CD8-positive, alpha-beta T cell (primary cell): ENCODE measurements at regions of chr11 and their contacts with region 1.

Region 1: DNA sequence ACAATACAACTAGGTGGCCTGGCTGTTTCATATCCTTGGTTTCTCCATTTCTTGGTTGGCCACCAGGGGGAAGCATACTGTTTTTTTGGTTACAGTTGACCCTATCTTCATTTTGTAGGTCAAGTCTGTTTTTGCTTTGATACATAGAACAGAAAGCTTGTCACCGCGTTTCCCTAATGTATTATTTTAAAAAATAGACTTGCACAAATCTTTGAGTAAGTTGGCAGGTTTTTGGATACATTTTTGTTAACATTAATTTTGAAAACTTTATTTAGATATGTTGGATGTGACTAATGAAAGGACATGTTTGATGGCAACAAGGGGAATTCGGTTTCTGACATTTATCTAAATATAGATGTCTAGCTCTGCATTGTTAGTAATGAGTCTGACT is 3.0 kb downstream of the NCR3LG1 start:
- DNase-seq: peak; percentile 13 to 82 (median 62)
- ATAC-seq: no peak
- H3K4me3 ChIP-seq: no peak overlapping the region
- H3K4me3 Mint-ChIP-seq: peak overlapping the region; percentile 91
- H3K27ac ChIP-seq: no peak overlapping the region
- H3K27ac Mint-ChIP-seq: no peak overlapping the region
- H3K4me1 ChIP-seq: peaks cover 20% of the 10 kb centered on the region
- H3K4me1 Mint-ChIP-seq: peaks cover 30% of the 10 kb centered on the region
- H3K27me3 ChIP-seq: no peaks in the 10 kb centered on the region
- H3K27me3 Mint-ChIP-seq: no peaks in the 10 kb centered on the region
- CTCF ChIP-seq: peak; percentile 68

Region 2: DNA sequence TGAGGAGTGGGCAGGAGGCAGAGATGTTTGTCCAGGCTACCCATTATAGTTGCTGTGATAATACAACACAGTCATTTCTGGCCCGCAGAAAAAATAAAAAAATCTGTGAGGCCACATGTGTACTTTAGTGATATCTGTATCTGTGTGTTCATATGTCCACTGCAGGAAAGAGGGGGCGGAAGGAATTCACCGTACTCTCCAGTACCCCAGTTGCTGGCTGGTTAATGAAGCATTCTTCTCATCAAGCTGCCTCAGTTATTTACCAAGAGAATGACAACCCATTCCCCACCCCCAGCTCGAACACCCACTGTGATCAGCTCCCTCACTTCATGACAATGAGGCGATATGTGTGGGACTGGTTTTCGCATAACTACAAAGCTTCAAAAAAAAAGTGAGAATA is 1307.5 kb before region 1 on chr11:
- CTCF ChIA-PET with region 1: no interaction called
- POLR2A ChIA-PET with region 1: no interaction called
- intact Hi-C with region 1: no loop called
- DNase-seq: no peak
- ATAC-seq: no peak
- H3K4me3 ChIP-seq: no peak overlapping the region
- H3K4me3 Mint-ChIP-seq: no peak overlapping the region
- H3K27ac ChIP-seq: no peak overlapping the region
- H3K27ac Mint-ChIP-seq: no peak overlapping the region
- H3K4me1 ChIP-seq: no peaks in the 10 kb centered on the region
- H3K4me1 Mint-ChIP-seq: no peaks in the 10 kb centered on the region
- H3K27me3 ChIP-seq: peaks cover 0 to 2% of the 10 kb centered on the region in 2 experiments
- H3K27me3 Mint-ChIP-seq: no peaks in the 10 kb centered on the region
- CTCF ChIP-seq: no peak

Region 3: GRCh38 chr11:17077520-17078401 is 276.8 kb before region 1 on chr11 and contains the start of gene RPS13:
- CTCF ChIA-PET with region 1: no interaction called
- POLR2A ChIA-PET with region 1: interaction called, 3 read pairs
- intact Hi-C with region 1: loop called (anchors 5 kb)
- DNase-seq: peak; percentile 88 to 99 (median 95)
- ATAC-seq: peak; percentile 94
- H3K4me3 ChIP-seq: peak within 1 kb of the TSS; percentile 86 to 95
- H3K4me3 Mint-ChIP-seq: peak within 1 kb of the TSS; percentile 99
- H3K27ac ChIP-seq: peak within 1 kb of the TSS; percentile 92 to 96
- H3K27ac Mint-ChIP-seq: peak within 1 kb of the TSS; percentile 99
- H3K4me1 ChIP-seq: peaks cover 25% of the 10 kb centered on the region
- H3K4me1 Mint-ChIP-seq: peaks cover 48% of the 10 kb centered on the region
- H3K27me3 ChIP-seq: no peaks in the 10 kb centered on the region
- H3K27me3 Mint-ChIP-seq: no peaks in the 10 kb centered on the region
- CTCF ChIP-seq: no peak
- total RNA-seq, gene RPS13: 2,112 to 2,169 TPM

Region 4: GRCh38 chr11:17197431-17197898 is 157.1 kb before region 1 on chr11:
- CTCF ChIA-PET with region 1: no interaction called
- POLR2A ChIA-PET with region 1: no interaction called
- intact Hi-C with region 1: no loop called
- DNase-seq: no peak
- ATAC-seq: no peak
- H3K4me3 ChIP-seq: no peak overlapping the region
- H3K4me3 Mint-ChIP-seq: no peak overlapping the region
- H3K27ac ChIP-seq: no peak overlapping the region
- H3K27ac Mint-ChIP-seq: no peak overlapping the region
- H3K4me1 ChIP-seq: no peaks in the 10 kb centered on the region
- H3K4me1 Mint-ChIP-seq: peaks cover 29% of the 10 kb centered on the region
- H3K27me3 ChIP-seq: no peaks in the 10 kb centered on the region
- H3K27me3 Mint-ChIP-seq: no peaks in the 10 kb centered on the region
- CTCF ChIP-seq: no peak

Region 5: DNA sequence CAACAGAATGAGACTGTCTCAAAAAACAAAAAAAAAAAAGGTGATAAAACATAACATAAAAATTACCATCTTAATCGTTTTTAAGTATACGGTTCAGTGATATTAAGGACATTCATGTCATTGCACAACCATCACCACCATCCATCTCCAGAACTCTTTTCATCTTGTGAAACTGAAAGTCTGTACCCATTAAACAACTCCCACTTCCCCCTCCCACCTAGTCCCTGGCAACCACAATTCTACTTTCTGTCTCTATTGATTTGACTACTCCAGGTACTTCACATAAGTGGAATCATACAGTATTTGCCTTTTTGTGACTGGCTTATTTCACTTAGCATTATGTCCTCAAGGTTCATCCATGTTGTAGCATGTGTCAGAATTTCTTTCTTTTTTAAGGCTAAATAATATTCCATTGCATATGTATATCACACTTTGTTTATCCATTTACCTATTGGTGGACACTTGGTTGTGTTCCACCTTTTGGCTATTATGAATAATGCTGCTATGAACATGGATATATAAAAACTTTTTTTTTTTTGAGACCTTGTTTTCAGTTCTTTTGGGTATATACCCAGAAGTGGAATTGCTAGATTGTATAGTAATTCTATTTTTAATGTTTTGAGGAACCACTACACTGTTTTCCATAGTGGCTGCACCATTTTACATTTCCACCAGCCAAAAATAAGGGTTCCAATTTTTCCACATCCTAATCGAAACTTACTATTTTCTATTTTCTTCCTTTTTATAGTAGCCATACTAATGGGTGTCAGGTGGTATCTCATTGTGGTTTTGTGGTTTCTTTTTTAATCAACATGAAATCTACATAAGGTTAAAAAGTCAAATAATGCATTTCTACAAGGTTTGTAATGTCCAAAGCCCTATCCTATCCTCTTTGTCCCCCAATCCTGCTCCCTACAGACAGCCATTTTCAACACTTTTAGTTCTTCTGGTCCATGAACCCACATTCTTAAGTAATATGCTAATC is 123.4 kb before region 1 on chr11:
- CTCF ChIA-PET with region 1: interaction called, 7 read pairs
- POLR2A ChIA-PET with region 1: no interaction called
- intact Hi-C with region 1: loop called (anchors 1 to 2 kb)
- DNase-seq: peak in 2 of 9 experiments; percentile 34 to 64
- ATAC-seq: peak; percentile 81
- H3K4me3 ChIP-seq: no peak overlapping the region
- H3K4me3 Mint-ChIP-seq: no peak overlapping the region
- H3K27ac ChIP-seq: no peak overlapping the region
- H3K27ac Mint-ChIP-seq: no peak overlapping the region
- H3K4me1 ChIP-seq: peaks cover 5% of the 10 kb centered on the region
- H3K4me1 Mint-ChIP-seq: peaks cover 13% of the 10 kb centered on the region
- H3K27me3 ChIP-seq: no peaks in the 10 kb centered on the region
- H3K27me3 Mint-ChIP-seq: no peaks in the 10 kb centered on the region
- CTCF ChIP-seq: no peak

Region 6: DNA sequence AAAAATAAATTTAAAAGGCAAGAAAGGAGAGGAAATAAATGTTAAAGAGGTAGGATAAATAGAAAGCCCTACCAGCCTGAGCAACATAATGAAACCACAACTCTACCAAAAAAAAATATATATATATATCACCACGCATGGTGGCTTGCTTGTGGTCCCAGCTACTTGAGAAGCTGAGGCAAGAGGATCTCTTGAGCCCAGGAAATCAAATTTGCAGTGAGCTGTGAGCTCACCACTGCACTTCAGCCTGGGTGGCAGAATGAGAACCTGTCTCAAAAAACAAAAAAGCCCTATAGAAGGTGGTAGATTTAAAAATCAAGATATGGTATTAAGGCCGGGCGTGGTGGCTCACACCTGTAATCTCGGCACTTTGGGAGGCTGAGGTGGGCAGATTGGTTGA is 67.5 kb before region 1 on chr11:
- CTCF ChIA-PET with region 1: interaction called, 8 read pairs
- POLR2A ChIA-PET with region 1: interaction called, 5 read pairs
- intact Hi-C with region 1: loop called in 1 of 2 experiments (anchors 2 kb)
- DNase-seq: peak in 3 of 9 experiments; percentile 40 to 72 (median 45)
- ATAC-seq: peak; percentile 19
- H3K4me3 ChIP-seq: no peak overlapping the region
- H3K4me3 Mint-ChIP-seq: peak overlapping the region; percentile 47
- H3K27ac ChIP-seq: peak overlapping the region; percentile 26 to 64
- H3K27ac Mint-ChIP-seq: peak overlapping the region; percentile 94
- H3K4me1 ChIP-seq: peaks cover 56% of the 10 kb centered on the region
- H3K4me1 Mint-ChIP-seq: peaks cover 65% of the 10 kb centered on the region
- H3K27me3 ChIP-seq: no peaks in the 10 kb centered on the region
- H3K27me3 Mint-ChIP-seq: no peaks in the 10 kb centered on the region
- CTCF ChIP-seq: no peak

Region 7: GRCh38 chr11:17343907-17344306 is 10.7 kb before region 1 on chr11:
- CTCF ChIA-PET with region 1: no interaction called
- POLR2A ChIA-PET with region 1: no interaction called
- intact Hi-C with region 1: no loop called
- DNase-seq: no peak
- ATAC-seq: no peak
- H3K4me3 ChIP-seq: no peak overlapping the region
- H3K4me3 Mint-ChIP-seq: no peak overlapping the region
- H3K27ac ChIP-seq: no peak overlapping the region
- H3K27ac Mint-ChIP-seq: no peak overlapping the region
- H3K4me1 ChIP-seq: no peaks in the 10 kb centered on the region
- H3K4me1 Mint-ChIP-seq: peaks cover 4% of the 10 kb centered on the region
- H3K27me3 ChIP-seq: no peaks in the 10 kb centered on the region
- H3K27me3 Mint-ChIP-seq: no peaks in the 10 kb centered on the region
- CTCF ChIP-seq: no peak

Region 8: GRCh38 chr11:17371614-17372013 is 17.0 kb after region 1 on chr11:
- CTCF ChIA-PET with region 1: interaction called, 13 read pairs
- POLR2A ChIA-PET with region 1: no interaction called
- intact Hi-C with region 1: no loop called
- DNase-seq: no peak
- ATAC-seq: no peak
- H3K4me3 ChIP-seq: no peak overlapping the region
- H3K4me3 Mint-ChIP-seq: no peak overlapping the region
- H3K27ac ChIP-seq: no peak overlapping the region
- H3K27ac Mint-ChIP-seq: no peak overlapping the region
- H3K4me1 ChIP-seq: no peaks in the 10 kb centered on the region
- H3K4me1 Mint-ChIP-seq: no peaks in the 10 kb centered on the region
- H3K27me3 ChIP-seq: no peaks in the 10 kb centered on the region
- H3K27me3 Mint-ChIP-seq: no peaks in the 10 kb centered on the region
- CTCF ChIP-seq: no peak

Region 9: DNA sequence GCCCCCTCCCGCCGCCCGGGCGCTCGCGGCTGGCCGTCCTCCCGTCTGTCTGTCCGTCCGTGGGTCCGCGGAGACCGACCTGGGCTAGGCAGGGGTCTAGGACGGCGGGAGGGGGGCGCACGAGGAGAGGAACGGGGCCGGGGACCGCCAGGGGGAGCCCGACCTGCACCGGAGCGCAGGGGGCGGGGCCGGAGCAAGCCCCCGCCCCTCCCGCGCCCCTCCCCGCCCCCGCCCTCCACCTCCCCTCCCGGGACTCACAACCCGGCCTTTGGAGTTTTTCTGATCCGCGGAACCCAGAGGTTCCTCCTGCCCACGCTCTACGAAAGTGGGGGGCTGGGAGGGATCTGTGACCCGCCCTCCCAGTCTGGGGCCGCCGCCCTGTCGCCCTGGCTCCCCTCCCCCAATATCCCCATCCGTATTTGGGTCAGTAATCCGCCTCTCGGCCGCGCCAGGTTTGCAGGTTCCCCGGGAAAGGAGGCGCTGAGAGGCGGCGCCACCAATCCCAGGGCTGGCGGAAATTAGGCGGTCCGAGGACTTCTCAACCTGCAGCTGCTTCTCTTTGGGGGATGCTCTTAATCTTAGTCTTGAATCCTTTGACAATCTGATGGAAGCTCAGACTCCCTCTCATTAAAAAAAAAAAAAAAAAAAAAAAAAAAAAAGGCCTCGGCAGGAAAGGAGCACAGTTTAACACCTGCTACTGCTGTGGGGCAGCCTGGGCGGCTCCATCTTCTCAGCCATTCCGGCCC is 34.8 kb after region 1 on chr11:
- CTCF ChIA-PET with region 1: interaction called, 10 read pairs
- POLR2A ChIA-PET with region 1: interaction called, 5 read pairs
- intact Hi-C with region 1: loop called (anchors 2 kb)
- DNase-seq: peak; percentile 60 to 89 (median 83)
- ATAC-seq: peak; percentile 91
- H3K4me3 ChIP-seq: peak overlapping the region; percentile 69 to 75
- H3K4me3 Mint-ChIP-seq: peak overlapping the region; percentile 85
- H3K27ac ChIP-seq: no peak overlapping the region
- H3K27ac Mint-ChIP-seq: no peak overlapping the region
- H3K4me1 ChIP-seq: peaks cover 9% of the 10 kb centered on the region
- H3K4me1 Mint-ChIP-seq: peaks cover 8% of the 10 kb centered on the region
- H3K27me3 ChIP-seq: peaks cover 0 to 2% of the 10 kb centered on the region in 2 experiments
- H3K27me3 Mint-ChIP-seq: no peaks in the 10 kb centered on the region
- CTCF ChIP-seq: peak; percentile 71